Breast epithelium (tissue), 4 donors: ENCODE measurements at regions of chr5 and their contacts with region 1.

Region 1: DNA sequence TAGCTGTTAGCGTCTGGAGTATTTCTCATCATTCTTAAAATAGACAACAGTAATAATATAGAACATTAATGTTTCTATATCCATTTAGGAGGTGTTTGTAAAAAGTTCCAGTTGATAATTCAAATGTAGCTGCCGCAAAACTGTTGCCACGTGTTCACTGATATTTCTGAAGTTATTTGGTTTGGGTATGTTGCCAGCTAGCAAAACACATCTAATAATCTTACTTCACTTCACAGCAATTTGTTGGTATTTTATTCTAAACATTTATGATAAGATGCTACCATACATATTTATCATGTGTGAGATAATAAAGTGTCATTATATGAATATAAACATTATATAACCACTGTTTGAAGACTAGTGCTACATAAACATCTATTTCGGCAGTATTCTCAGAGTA is 101.6 kb downstream of the CDH12 start:
- DNase-seq: no peak
- H3K4me3 ChIP-seq: no peak overlapping the region
- H3K27ac ChIP-seq: no peak overlapping the region
- H3K4me1 ChIP-seq: no peaks in the 10 kb centered on the region
- H3K27me3 ChIP-seq: no peaks in the 10 kb centered on the region
- CTCF ChIP-seq: no peak
- POLR2A ChIP-seq: no peak

Region 2: GRCh38 chr5:22070188-22070756 is 681.3 kb before region 1 on chr5:
- intact Hi-C with region 1: no loop called
- DNase-seq: no peak
- H3K4me3 ChIP-seq: no peak overlapping the region
- H3K27ac ChIP-seq: no peak overlapping the region
- H3K4me1 ChIP-seq: no peaks in the 10 kb centered on the region
- H3K27me3 ChIP-seq: no peaks in the 10 kb centered on the region
- CTCF ChIP-seq: no peak
- POLR2A ChIP-seq: no peak

Region 3: GRCh38 chr5:22719842-22720241 is 31.7 kb before region 1 on chr5:
- intact Hi-C with region 1: loop called (anchors 2 kb)
- DNase-seq: no peak
- H3K4me3 ChIP-seq: no peak overlapping the region
- H3K27ac ChIP-seq: no peak overlapping the region
- H3K4me1 ChIP-seq: no peaks in the 10 kb centered on the region
- H3K27me3 ChIP-seq: no peaks in the 10 kb centered on the region
- CTCF ChIP-seq: no peak
- POLR2A ChIP-seq: no peak